ENCODE measurements at regions of chr3 and their contacts with region 1.

Region 1: DNA sequence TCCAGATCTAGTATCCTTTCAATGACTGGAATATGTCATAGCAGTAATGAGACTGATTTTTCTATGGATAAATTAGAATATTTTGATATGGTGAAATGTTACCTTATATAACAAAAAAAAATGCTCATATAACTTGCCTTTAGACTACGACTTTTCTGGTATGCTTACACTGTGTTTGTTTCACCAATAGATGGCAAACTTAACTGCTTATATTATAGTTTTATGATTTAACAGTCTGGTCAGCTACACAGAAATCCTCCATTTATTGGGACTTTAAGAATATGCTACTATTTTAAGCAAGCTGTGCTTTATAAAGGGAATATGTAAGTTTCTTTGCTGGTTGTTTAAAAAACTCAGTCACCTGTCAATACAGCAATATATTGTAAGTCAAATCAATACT is 205.6 kb downstream of the VGLL3 start:
- DNase-seq: no peak
- H3K4me3 Mint-ChIP-seq: no peak overlapping the region
- H3K27ac Mint-ChIP-seq: no peak overlapping the region
- H3K4me1 Mint-ChIP-seq: peaks cover 7% of the 10 kb centered on the region
- H3K27me3 Mint-ChIP-seq: no peaks in the 10 kb centered on the region
- CTCF ChIP-seq: no peak

Region 2: DNA sequence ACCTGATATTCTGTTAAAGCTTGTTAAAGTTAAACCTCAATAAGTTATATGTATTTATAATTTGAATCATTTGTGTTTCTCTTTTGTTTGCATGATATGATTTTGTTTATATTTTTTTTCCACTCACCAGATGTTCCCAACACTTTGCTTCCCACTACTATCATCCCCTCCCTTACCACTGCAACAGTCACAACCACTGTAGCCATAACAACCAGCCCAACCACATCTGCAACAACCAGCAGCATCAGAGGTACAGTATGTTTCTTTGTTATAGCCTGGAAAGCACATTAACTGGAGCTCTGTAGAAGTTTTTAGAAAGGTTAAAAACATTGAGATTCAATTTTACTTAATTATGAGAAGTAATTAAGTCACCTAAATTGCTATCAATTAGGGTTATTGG is 806.4 kb before region 1 on chr3:
- CTCF ChIA-PET with region 1: no interaction called
- intact Hi-C with region 1: no loop called
- DNase-seq: no peak
- H3K4me3 Mint-ChIP-seq: no peak overlapping the region
- H3K27ac Mint-ChIP-seq: no peak overlapping the region
- H3K4me1 Mint-ChIP-seq: no peaks in the 10 kb centered on the region
- H3K27me3 Mint-ChIP-seq: no peaks in the 10 kb centered on the region
- CTCF ChIP-seq: no peak

Region 3: DNA sequence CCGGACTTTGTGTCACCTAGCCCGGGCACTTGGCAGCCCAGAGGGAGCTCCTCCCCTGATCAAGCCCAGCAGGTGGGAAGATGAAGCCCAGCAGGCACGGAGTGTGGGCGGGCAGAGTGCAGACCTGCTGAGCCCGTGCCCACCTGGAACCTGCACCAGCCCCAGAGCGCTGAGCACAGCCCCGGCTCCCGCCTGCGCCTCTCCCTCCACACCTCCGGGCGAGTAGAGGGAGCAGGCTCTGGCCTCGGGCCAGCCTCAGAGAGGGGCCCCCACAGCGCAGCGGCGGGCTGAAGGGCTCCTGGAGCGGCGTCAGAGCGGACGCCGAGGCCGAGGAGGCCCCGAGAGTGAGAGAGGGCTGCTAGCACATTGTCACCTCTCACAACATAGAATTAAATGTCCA is 52.1 kb before region 1 on chr3:
- CTCF ChIA-PET with region 1: no interaction called
- intact Hi-C with region 1: no loop called
- DNase-seq: no peak
- H3K4me3 Mint-ChIP-seq: no peak overlapping the region
- H3K27ac Mint-ChIP-seq: no peak overlapping the region
- H3K4me1 Mint-ChIP-seq: no peaks in the 10 kb centered on the region
- H3K27me3 Mint-ChIP-seq: no peaks in the 10 kb centered on the region
- CTCF ChIP-seq: no peak

Region 4: GRCh38 chr3:86856711-86857110 is 71.3 kb after region 1 on chr3:
- CTCF ChIA-PET with region 1: no interaction called
- intact Hi-C with region 1: no loop called
- DNase-seq: no peak
- H3K4me3 Mint-ChIP-seq: no peak overlapping the region
- H3K27ac Mint-ChIP-seq: no peak overlapping the region
- H3K4me1 Mint-ChIP-seq: no peaks in the 10 kb centered on the region
- H3K27me3 Mint-ChIP-seq: no peaks in the 10 kb centered on the region
- CTCF ChIP-seq: no peak

Region 5: GRCh38 chr3:86951343-86951742 is 166.0 kb after region 1 on chr3:
- CTCF ChIA-PET with region 1: no interaction called
- intact Hi-C with region 1: loop called (anchors 5 kb)
- DNase-seq: no peak
- H3K4me3 Mint-ChIP-seq: no peak overlapping the region
- H3K27ac Mint-ChIP-seq: no peak overlapping the region
- H3K4me1 Mint-ChIP-seq: peaks cover 24% of the 10 kb centered on the region
- H3K27me3 Mint-ChIP-seq: no peaks in the 10 kb centered on the region
- CTCF ChIP-seq: no peak

Region 6: GRCh38 chr3:86969500-86970189 is 184.3 kb after region 1 on chr3:
- CTCF ChIA-PET with region 1: interaction called, 6 read pairs
- intact Hi-C with region 1: loop called (anchors 1 kb)
- DNase-seq: peak; percentile 45
- H3K4me3 Mint-ChIP-seq: no peak overlapping the region
- H3K27ac Mint-ChIP-seq: peak overlapping the region; percentile 84
- H3K4me1 Mint-ChIP-seq: peaks cover 66% of the 10 kb centered on the region
- H3K27me3 Mint-ChIP-seq: no peaks in the 10 kb centered on the region
- CTCF ChIP-seq: peak; percentile 48

Region 7: GRCh38 chr3:86990734-86991481 is 205.5 kb after region 1 on chr3 and contains the start of gene VGLL3:
- CTCF ChIA-PET with region 1: no interaction called
- intact Hi-C with region 1: loop called (anchors 5 kb)
- DNase-seq: peak; percentile 84
- H3K4me3 Mint-ChIP-seq: peak within 1 kb of the TSS; percentile 95
- H3K27ac Mint-ChIP-seq: peak within 1 kb of the TSS; percentile 96
- H3K4me1 Mint-ChIP-seq: peaks cover 38% of the 10 kb centered on the region
- H3K27me3 Mint-ChIP-seq: no peaks in the 10 kb centered on the region
- CTCF ChIP-seq: peak; percentile 39
- total RNA-seq, gene VGLL3: 40.0 and 48.2 TPM in 2 replicates

Measured in Calu3 (cell line).